Panc1 (cell line): ENCODE measurements at regions of chr15 and their contacts with region 1.

Region 1: DNA sequence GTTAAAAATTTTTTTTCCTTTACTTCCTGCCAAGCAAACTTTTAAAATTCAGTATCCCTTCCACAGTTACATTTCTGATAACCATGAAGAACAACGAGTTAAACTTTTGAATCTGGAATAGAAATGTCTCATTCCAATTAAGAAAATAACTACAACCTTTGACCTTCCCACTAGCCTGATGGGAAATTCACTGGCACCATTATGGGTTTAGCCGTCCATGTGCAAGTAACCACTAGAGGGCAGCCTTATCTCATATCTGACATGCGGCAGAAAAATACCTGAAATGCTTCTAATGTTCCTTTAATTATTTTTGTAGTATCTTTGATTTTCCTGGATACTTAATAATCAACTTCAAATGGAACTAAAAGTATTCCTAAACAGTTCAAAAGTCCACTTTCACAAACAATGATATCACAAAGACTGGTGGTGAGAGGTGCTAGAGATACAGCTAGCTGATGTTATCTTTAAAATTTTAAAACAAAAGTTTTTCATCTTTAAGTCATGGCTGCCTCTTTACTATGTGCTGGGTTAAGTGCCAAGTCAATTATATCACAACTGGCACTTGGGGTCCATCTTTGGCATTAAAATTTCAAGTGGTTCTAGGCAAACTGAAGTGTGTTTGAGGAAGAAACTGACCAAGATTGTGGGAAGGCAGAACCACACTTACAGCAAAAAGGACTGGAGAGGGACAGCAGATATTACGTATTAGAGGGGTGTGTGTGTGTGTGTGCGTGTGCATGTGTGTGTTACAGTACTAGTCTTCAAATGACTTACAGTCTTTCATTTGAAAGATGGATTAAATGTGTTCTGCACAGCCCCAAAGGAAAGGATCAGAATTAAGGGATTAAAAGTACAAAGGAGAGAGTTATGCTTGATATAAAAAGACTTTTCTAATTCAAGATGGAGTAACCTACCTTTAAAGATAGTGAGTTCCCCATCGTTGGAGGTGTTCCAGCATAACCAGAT is 107.1 kb upstream of the ICE2 start:
- DNase-seq: peak; percentile 58
- ATAC-seq: peak; percentile 78
- H3K4me3 ChIP-seq: no peak overlapping the region
- H3K27ac ChIP-seq: no peak overlapping the region
- H3K4me1 ChIP-seq: peaks cover 7% of the 10 kb centered on the region
- H3K27me3 ChIP-seq: peaks cover 44% of the 10 kb centered on the region
- CTCF ChIP-seq: peak; percentile 85; the same call in 1 of the 2 replicates

Region 2: DNA sequence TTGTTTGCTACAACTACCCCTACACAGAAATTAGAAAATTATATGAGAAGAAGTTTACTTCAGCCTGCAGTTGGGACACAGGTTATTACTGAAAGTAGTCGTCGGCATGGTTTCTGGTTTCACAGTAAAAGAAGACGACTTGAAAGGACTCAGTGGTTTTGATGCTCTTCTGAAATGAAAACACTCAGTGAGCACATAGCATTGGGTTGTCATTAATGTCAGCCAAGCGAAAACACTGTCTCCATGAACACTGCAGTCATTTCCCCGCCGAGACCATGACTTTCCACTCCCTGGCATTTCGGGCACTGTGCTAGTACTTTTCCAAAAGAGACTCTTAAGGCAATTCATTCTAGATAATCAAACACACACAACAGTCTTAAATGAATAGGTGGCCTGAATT is 37.9 kb before region 1 on chr15:
- CTCF ChIA-PET with region 1: no interaction called
- POLR2A ChIA-PET with region 1: no interaction called
- in situ Hi-C with region 1: no loop called
- intact Hi-C with region 1: no loop called
- DNase-seq: no peak
- ATAC-seq: no peak
- H3K4me3 ChIP-seq: no peak overlapping the region
- H3K27ac ChIP-seq: no peak overlapping the region
- H3K4me1 ChIP-seq: no peaks in the 10 kb centered on the region
- H3K27me3 ChIP-seq: peaks cover 3% of the 10 kb centered on the region; the same call in 1 of the 2 replicates
- CTCF ChIP-seq: no peak

Region 3: GRCh38 chr15:60916679-60917460 is 330.8 kb after region 1 on chr15:
- CTCF ChIA-PET with region 1: interaction called, 14 read pairs
- POLR2A ChIA-PET with region 1: no interaction called
- in situ Hi-C with region 1: no loop called
- intact Hi-C with region 1: loop called (anchors 1 kb)
- DNase-seq: peak; percentile 55
- ATAC-seq: peak; percentile 97
- H3K4me3 ChIP-seq: no peak overlapping the region
- H3K27ac ChIP-seq: no peak overlapping the region
- H3K4me1 ChIP-seq: no peaks in the 10 kb centered on the region
- H3K27me3 ChIP-seq: peaks cover 16% of the 10 kb centered on the region
- CTCF ChIP-seq: peak; percentile 85

Region 4: GRCh38 chr15:61051569-61052031 is 465.6 kb after region 1 on chr15:
- CTCF ChIA-PET with region 1: interaction called, 3 read pairs
- POLR2A ChIA-PET with region 1: no interaction called
- in situ Hi-C with region 1: no loop called
- intact Hi-C with region 1: loop called (anchors 5 kb)
- DNase-seq: no peak
- ATAC-seq: peak; percentile 80
- H3K4me3 ChIP-seq: no peak overlapping the region
- H3K27ac ChIP-seq: no peak overlapping the region
- H3K4me1 ChIP-seq: no peaks in the 10 kb centered on the region
- H3K27me3 ChIP-seq: peaks cover 19% of the 10 kb centered on the region; the same call in 1 of the 2 replicates
- CTCF ChIP-seq: peak; percentile 53